Left cardiac atrium (tissue), 4 donors: ENCODE measurements at regions of chr12 and their contacts with region 1.

Region 1: DNA sequence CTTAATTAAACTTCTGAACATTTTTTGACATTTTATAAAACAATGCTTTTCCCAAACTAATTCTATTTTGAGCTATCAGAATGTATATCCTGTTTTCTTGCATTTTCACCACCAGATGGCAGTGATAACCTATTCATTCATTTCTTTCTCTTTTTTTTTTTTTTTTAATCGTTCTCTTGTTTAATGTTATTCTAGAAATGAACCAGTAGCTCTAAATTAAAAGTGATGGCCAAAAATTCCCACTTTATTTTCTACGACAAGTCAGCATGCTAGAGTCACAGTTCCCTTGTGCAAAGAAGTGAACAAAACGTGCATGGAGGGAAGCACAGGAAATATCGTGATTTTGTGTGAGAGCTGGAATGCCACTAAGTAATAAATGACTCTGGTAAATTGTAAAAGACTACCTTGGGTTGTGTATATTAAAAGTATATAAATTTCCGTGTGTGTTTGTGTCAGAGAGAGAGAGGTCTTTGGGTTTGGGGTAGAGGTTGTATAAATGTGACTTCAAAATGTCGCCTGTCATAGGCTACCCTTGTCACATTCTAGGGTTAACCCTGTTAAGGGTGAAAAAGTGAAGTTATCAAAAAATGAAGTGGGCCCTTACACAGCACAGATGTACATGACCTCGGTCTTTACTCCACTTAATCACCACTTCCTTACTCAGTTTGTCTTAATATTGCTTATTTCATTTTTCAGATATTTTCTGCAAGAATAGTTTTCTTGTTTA is 40.4 kb upstream of the LDHB start:
- DNase-seq: no peak
- ATAC-seq: no peak

Region 2: GRCh38 chr12:21989819-21990412 is 291.8 kb after region 1 on chr12:
- intact Hi-C with region 1: loop called (anchors 2 to 10 kb)
- DNase-seq: no peak
- ATAC-seq: no peak

Region 3: GRCh38 chr12:22018860-22019259 is 320.8 kb after region 1 on chr12:
- intact Hi-C with region 1: loop called in 1 of 2 experiments (anchors 1 kb)
- DNase-seq: no peak
- ATAC-seq: no peak